ENCODE measurements at regions of chr5 and their contacts with region 1.

Region 1: DNA sequence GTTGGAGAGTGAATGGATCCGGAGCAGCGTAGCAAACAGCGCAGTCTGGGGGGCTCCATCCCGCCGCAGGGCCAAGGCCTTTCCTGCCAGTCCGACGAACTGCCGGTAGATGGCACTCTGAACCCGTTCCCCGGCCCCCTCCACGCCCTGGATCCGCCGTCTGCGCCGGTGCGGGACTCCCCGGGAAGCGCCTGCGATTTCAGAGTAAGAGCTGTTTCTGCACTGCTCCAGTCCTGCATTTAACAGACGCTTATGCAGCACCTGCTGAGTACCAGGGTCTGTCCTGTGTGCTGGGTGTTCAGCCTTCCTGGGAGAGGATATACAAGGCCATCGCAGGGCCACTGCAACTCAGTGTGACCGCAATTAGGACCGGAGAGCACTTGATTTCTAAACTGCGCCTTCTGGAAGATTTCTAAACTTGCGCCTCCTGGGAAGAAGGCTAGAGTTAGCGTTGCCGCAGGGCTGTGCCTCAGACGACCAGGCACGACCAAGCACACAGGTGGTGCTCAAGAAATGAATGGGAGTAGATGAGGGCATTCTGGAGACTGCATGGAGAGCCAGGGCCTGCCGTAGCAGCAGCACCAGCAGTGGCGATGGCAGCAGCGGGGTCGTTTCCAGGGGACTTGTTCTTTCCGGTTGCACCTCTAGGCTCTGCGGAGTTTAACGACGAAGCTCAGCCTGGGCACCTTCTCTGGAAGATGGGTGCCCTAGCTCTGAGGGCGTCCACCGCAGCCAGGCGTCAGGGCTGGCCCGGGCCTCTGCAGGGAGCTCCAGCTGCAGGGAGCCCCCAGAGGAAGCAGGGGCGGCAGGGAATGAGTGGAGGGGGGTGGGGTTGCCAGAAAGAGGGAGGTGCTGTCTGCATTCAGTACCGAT is 14.3 kb upstream of the TIFAB start:
- DNase-seq: peak; percentile 94
- H3K27ac ChIP-seq: no peak overlapping the region
- CTCF ChIP-seq: peak; percentile 98

Region 2: GRCh38 chr5:135476615-135477582 is 10.5 kb after region 1 on chr5:
- CTCF ChIA-PET with region 1: interaction called, 12 read pairs
- POLR2A ChIA-PET with region 1: no interaction called
- DNase-seq: no peak
- H3K27ac ChIP-seq: no peak overlapping the region
- CTCF ChIP-seq: no peak

Region 3: GRCh38 chr5:135533334-135533733 is 66.9 kb after region 1 on chr5:
- CTCF ChIA-PET with region 1: interaction called, 12 read pairs
- POLR2A ChIA-PET with region 1: no interaction called
- DNase-seq: no peak
- H3K27ac ChIP-seq: no peak overlapping the region
- CTCF ChIP-seq: no peak

Region 4: GRCh38 chr5:135551593-135552447 is 85.4 kb after region 1 on chr5:
- CTCF ChIA-PET with region 1: interaction called, 455 read pairs
- POLR2A ChIA-PET with region 1: no interaction called
- DNase-seq: peak; percentile 84
- H3K27ac ChIP-seq: no peak overlapping the region
- CTCF ChIP-seq: peak; percentile 95

Region 5: DNA sequence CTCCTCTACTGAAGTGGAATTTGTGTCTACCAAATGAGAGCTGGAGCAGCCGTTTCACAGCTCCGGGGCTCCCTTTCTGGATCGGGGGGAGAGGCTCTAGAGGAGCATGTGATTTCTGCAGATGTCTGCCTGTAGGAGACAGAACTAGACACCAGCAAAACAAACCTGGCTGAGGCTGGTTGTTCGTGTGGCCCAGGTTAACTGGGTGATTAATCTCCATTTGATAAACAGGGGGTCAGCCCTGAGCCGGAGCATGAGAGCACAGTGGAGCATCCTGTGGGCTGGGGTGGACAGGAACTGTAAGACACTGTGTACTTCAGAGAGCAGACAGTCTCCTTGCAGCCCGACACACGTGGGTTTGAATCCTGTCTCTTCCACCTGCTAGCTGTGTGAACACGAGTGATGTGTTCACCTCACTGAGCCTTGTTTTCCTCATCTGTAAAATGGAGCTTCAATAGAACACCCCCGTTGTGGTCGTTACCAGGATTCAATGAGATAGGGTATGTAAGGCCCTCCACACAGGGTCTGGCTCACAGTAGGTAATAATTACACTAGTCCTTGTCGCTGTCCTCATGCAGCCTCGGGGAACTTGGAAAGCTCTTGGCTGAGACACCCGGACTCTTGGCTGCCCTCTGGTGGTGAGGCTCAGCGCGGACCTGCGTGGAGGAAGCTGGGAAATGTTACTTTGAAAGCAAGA is 99.5 kb after region 1 on chr5:
- CTCF ChIA-PET with region 1: interaction called, 23 read pairs
- POLR2A ChIA-PET with region 1: no interaction called
- DNase-seq: peak; percentile 64
- H3K27ac ChIP-seq: no peak overlapping the region
- CTCF ChIP-seq: peak; percentile 85